Transverse colon (tissue), 4 donors: ENCODE measurements at regions of chr4 and their contacts with region 1.

Region 1: GRCh38 chr4:165464813-165465381 is 86.1 kb downstream of the CPE start:
- DNase-seq: no peak
- H3K4me3 ChIP-seq: no peak overlapping the region
- H3K27ac ChIP-seq: no peak overlapping the region
- H3K4me1 ChIP-seq: peaks cover 0 to 3% (median 0%) of the 10 kb centered on the region in 4 donors
- H3K27me3 ChIP-seq: no peaks in the 10 kb centered on the region
- CTCF ChIP-seq: peak; percentile 70 to 79 (median 75)
- EP300 ChIP-seq: no peak
- POLR2A ChIP-seq: no peak

Region 2: DNA sequence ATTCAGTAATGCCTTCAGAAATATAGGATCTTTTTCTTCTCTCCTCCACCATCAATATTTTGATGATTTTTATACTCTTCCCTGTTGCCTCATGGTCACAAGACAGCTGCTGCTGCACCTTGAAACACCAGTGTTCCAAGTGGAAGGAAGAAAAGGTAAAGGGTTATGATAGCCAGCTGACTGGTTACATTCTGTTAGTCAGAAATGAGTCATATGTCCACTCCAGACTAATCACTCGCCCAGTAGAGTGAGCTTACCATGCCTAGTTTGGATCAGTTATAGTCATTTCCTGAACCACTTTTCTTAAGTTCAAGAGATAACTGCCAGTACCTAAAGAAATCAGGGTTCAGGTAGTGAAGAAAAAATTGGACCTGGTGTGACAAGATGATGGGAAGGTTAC is 1243.3 kb before region 1 on chr4:
- in situ Hi-C with region 1: no loop called
- intact Hi-C with region 1: no loop called
- DNase-seq: no peak
- H3K4me3 ChIP-seq: no peak overlapping the region
- H3K27ac ChIP-seq: no peak overlapping the region
- H3K4me1 ChIP-seq: no peaks in the 10 kb centered on the region
- H3K27me3 ChIP-seq: no peaks in the 10 kb centered on the region
- CTCF ChIP-seq: no peak
- EP300 ChIP-seq: no peak
- POLR2A ChIP-seq: no peak

Region 3: GRCh38 chr4:165124463-165124862 is 340.4 kb before region 1 on chr4:
- in situ Hi-C with region 1: loop called in 1 of 4 experiments (anchors 5 kb)
- intact Hi-C with region 1: loop called (anchors 5 kb)
- DNase-seq: no peak
- H3K4me3 ChIP-seq: no peak overlapping the region
- H3K27ac ChIP-seq: no peak overlapping the region
- H3K4me1 ChIP-seq: no peaks in the 10 kb centered on the region
- H3K27me3 ChIP-seq: peaks cover 5% of the 10 kb centered on the region
- CTCF ChIP-seq: no peak
- EP300 ChIP-seq: no peak
- POLR2A ChIP-seq: no peak

Region 4: DNA sequence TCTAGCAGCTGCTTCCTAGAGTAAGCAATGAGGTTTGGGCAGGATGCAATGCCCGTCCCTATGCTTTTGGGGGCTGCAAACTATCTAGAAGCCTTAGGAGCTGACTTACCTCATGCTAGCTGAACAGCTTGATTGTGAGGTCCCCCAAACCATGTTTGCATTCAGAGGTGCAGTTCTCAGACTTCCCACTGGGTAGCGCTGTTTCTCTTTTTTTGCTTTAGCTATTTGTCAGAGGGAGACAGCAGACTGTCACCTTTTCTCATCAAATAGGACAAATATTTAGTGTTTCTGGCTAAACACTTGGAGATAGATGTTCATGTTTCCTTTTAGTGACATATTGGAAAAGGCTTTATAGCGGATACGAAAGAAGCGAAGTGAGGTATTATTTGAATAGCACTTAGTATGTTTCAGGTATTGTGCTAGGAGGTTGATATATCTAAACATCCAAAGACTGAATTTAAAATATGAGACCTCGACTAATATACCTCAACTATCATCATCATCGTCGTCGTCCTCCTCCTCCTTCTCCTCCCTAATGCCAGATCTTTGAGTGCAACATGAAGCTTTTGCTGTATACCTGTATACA is 333.6 kb before region 1 on chr4:
- in situ Hi-C with region 1: loop called in 3 of 4 experiments (anchors 5 to 10 kb)
- intact Hi-C with region 1: loop called (anchors 5 kb)
- DNase-seq: peak; percentile 67
- H3K4me3 ChIP-seq: no peak overlapping the region
- H3K27ac ChIP-seq: no peak overlapping the region
- H3K4me1 ChIP-seq: no peaks in the 10 kb centered on the region
- H3K27me3 ChIP-seq: peaks cover 3% of the 10 kb centered on the region
- CTCF ChIP-seq: peak; percentile 84 to 93 (median 88)
- EP300 ChIP-seq: no peak
- POLR2A ChIP-seq: no peak

Region 5: GRCh38 chr4:165355900-165356300 is 109.0 kb before region 1 on chr4:
- in situ Hi-C with region 1: loop called (anchors 5 to 25 kb)
- intact Hi-C with region 1: no loop called
- DNase-seq: no peak
- H3K4me3 ChIP-seq: no peak overlapping the region
- H3K27ac ChIP-seq: no peak overlapping the region
- H3K4me1 ChIP-seq: no peaks in the 10 kb centered on the region
- H3K27me3 ChIP-seq: no peaks in the 10 kb centered on the region
- CTCF ChIP-seq: peak in 4 of 5 experiments; percentile 19 to 47 (median 40)
- EP300 ChIP-seq: no peak
- POLR2A ChIP-seq: no peak

Region 6: GRCh38 chr4:166222271-166222670 is 757.4 kb after region 1 on chr4:
- in situ Hi-C with region 1: no loop called
- intact Hi-C with region 1: no loop called
- DNase-seq: no peak
- H3K4me3 ChIP-seq: no peak overlapping the region
- H3K27ac ChIP-seq: no peak overlapping the region
- H3K4me1 ChIP-seq: no peaks in the 10 kb centered on the region
- H3K27me3 ChIP-seq: no peaks in the 10 kb centered on the region
- CTCF ChIP-seq: no peak
- EP300 ChIP-seq: no peak
- POLR2A ChIP-seq: no peak